AG04450 (cell line): ENCODE measurements at regions of chr1 and their contacts with region 1.

Region 1: GRCh38 chr1:40774266-40774998 is 9.2 kb upstream of the KCNQ4 start:
- DNase-seq: no peak
- H3K4me3 ChIP-seq: no peak overlapping the region
- H3K27ac ChIP-seq: no peak overlapping the region
- H3K27me3 ChIP-seq: no peaks in the 10 kb centered on the region
- CTCF ChIP-seq: peak; percentile 70

Region 2: DNA sequence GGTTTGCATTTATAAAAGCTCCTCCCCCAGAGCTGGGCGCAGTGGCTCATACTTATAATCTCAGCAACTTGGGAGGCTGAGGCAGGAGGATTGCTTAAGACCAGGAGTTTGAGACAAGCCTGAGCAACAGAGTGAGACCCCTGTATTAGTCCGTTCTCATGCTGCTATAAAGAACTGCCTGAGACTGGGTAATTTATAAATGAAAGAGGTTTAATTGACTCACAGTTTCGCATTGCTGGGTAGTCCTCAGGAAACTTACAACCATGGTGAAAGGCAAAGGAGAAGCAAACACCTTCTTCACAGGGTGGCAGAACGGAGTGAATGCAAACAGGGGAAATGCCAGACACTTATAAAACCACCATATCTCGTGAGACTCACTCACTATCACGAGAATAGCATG is 190.5 kb before region 1 on chr1:
- CTCF ChIA-PET with region 1: no interaction called
- POLR2A ChIA-PET with region 1: no interaction called
- DNase-seq: no peak
- H3K4me3 ChIP-seq: no peak overlapping the region
- H3K27ac ChIP-seq: no peak overlapping the region
- H3K27me3 ChIP-seq: peaks cover 4% of the 10 kb centered on the region
- CTCF ChIP-seq: no peak

Region 3: GRCh38 chr1:40755067-40755466 is 19.4 kb before region 1 on chr1:
- CTCF ChIA-PET with region 1: interaction called, 11 read pairs
- POLR2A ChIA-PET with region 1: no interaction called
- DNase-seq: no peak
- H3K4me3 ChIP-seq: no peak overlapping the region
- H3K27ac ChIP-seq: no peak overlapping the region
- H3K27me3 ChIP-seq: no peaks in the 10 kb centered on the region
- CTCF ChIP-seq: no peak

Region 4: GRCh38 chr1:40763742-40764532 is 10.5 kb before region 1 on chr1:
- CTCF ChIA-PET with region 1: interaction called, 31 read pairs
- POLR2A ChIA-PET with region 1: no interaction called
- DNase-seq: no peak
- H3K4me3 ChIP-seq: no peak overlapping the region
- H3K27ac ChIP-seq: no peak overlapping the region
- H3K27me3 ChIP-seq: no peaks in the 10 kb centered on the region
- CTCF ChIP-seq: no peak

Region 5: GRCh38 chr1:40973912-40974311 is 199.5 kb after region 1 on chr1:
- CTCF ChIA-PET with region 1: no interaction called
- POLR2A ChIA-PET with region 1: no interaction called
- DNase-seq: no peak
- H3K4me3 ChIP-seq: no peak overlapping the region
- H3K27ac ChIP-seq: no peak overlapping the region
- H3K27me3 ChIP-seq: no peaks in the 10 kb centered on the region
- CTCF ChIP-seq: no peak